CD4-positive, alpha-beta T cell (primary cell): ENCODE measurements at regions of chr18 and their contacts with region 1.

Region 1: DNA sequence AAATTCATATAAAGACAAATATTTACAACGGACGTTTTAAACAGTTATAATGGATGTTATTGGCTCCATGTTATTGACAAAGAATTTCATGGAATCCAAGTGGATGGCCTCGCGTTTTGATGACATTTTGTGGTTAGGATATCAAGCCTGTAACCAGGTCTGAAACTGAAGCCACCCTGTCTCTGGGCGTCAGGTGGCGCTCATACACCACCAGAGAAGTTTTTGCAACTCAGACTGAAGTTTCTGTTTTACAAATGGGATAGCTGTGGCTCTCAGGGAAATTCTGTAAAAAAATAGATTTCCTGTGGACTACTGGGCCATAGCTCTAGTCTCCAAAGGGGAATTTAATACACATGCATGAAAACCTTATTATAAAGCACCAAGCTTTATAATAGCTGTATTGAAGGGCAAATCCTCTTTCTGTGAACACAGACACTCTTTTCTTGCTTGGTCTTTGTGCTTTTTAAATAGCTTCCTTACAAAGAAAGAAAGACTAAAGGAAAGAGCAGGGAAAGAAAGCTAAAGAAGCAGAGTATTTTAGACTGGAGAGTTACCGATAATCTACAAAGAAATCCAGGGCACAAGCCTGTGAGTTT is 86.7 kb downstream of the C18orf54 start:
- DNase-seq: peak in 4 of 14 experiments; percentile 7 to 20 (median 14)
- ATAC-seq: no peak
- H3K4me3 ChIP-seq: no peak overlapping the region
- H3K4me3 Mint-ChIP-seq: no peak overlapping the region
- H3K27ac ChIP-seq: no peak overlapping the region
- H3K27ac Mint-ChIP-seq: no peak overlapping the region
- H3K4me1 ChIP-seq: no peaks in the 10 kb centered on the region
- H3K4me1 Mint-ChIP-seq: no peaks in the 10 kb centered on the region
- H3K27me3 ChIP-seq: peaks cover 5 to 15% of the 10 kb centered on the region in 2 experiments
- H3K27me3 Mint-ChIP-seq: peaks cover 42% of the 10 kb centered on the region
- CTCF ChIP-seq: no peak

Region 2: DNA sequence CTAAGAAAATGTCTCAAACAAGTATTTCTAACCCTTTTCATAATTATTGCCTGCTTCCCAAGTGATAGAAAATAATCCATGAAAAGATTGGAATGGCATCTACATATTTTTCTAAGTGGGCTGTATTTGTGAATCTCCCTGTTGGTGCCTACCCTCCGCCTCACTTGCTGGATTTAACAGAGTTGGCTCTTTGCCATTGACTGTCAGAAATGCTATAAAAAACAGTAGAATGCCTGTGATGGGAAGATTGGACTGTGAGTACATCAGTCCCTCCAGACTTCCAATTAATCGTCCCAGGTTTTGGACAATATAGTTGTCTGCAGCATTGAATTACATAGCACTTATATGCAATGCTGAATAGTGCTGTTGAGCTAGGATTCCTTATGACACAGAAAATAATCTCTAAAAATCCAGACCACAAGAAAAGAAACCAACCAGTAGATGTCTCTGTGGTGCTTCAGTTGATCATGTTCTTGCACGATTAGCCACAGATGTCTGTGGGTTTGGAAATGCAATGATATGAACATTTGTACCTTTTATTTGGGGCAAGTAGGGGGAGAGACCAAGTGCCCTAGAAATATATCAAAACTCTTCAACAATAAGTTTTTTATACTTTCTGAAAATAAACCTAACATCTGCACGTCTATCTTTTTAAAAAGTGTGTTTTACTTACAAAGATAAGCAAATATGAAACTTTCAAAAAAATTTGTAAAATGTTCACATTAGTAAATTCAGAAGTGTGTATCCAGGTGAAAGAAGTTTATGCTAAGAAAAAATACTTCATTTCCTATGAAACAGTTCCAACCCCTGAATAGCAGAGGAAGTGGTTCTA is 235.1 kb after region 1 on chr18:
- CTCF ChIA-PET with region 1: no interaction called
- POLR2A ChIA-PET with region 1: no interaction called
- intact Hi-C with region 1: loop called in 1 of 2 experiments (anchors 10 kb)
- DNase-seq: peak in 3 of 14 experiments; percentile 46 to 56 (median 50)
- ATAC-seq: peak; percentile 41
- H3K4me3 ChIP-seq: no peak overlapping the region
- H3K4me3 Mint-ChIP-seq: no peak overlapping the region
- H3K27ac ChIP-seq: no peak overlapping the region
- H3K27ac Mint-ChIP-seq: no peak overlapping the region
- H3K4me1 ChIP-seq: no peaks in the 10 kb centered on the region
- H3K4me1 Mint-ChIP-seq: peaks cover 5% of the 10 kb centered on the region
- H3K27me3 ChIP-seq: no peaks in the 10 kb centered on the region
- H3K27me3 Mint-ChIP-seq: no peaks in the 10 kb centered on the region
- CTCF ChIP-seq: peak; percentile 55